Activated naive CD4-positive, alpha-beta T cell treated with anti-CD3 and anti-CD28 coated beads for 36 hours (primary cell): ENCODE measurements at regions of chr11 and their contacts with region 1.

Region 1: DNA sequence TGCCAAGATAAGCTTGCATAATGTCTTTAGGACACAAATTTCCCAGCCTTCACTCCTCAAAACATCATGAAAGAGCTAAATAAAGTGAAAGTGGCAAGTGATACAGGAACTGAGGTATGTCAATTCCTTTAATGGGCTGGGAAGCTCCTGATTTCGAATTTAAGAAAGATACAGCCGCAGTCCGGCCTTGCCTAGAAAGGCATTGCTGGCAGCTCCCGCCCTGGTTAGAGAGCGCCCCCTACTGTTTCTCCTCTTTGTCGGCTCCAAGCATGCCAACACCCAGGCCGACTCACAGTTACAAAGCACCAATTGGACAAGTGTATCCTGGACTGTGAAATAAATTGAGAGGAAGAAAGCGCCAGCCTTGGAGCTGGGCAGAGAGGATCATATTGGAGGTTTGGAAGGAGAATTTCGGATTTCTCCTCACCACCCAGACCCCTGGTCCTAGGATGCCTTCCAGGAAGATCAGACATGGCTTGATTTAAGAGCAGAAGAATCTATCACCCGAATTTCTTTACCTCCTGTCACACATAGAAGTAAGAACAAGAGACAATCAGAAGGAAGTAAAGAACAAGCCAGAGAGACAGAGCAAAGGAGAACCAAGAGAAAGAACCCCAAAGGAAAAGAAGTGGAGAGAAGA is 84.0 kb downstream of the FAM76B start:
- DNase-seq: peak; percentile 95
- H3K4me3 Mint-ChIP-seq: no peak overlapping the region
- H3K27ac Mint-ChIP-seq: no peak overlapping the region
- H3K4me1 Mint-ChIP-seq: peaks cover 16% of the 10 kb centered on the region
- H3K27me3 Mint-ChIP-seq: no peaks in the 10 kb centered on the region

Region 2: DNA sequence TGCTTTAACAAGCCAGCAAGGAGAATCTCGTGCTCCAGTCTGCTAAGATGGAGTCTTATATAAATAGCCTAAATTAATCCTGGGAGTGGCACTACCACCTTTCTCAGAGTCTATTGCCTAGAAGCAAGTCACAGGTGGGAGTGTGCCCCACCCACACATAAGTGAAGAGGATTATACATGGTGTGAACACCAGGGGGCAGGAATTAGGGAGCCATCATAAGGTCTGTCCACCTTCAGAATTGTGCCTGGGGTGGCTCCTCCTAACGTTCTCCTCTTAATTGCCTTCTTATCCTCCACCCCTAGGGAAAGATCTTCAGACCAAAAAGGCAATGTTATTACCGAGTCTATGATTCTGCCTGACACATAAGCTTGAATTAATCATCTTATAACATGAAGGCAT is 197.8 kb before region 1 on chr11:
- CTCF ChIA-PET with region 1: interaction called, 9 read pairs
- intact Hi-C with region 1: loop called (anchors 1 kb)
- DNase-seq: peak; percentile 7
- H3K4me3 Mint-ChIP-seq: no peak overlapping the region
- H3K27ac Mint-ChIP-seq: no peak overlapping the region
- H3K4me1 Mint-ChIP-seq: no peaks in the 10 kb centered on the region
- H3K27me3 Mint-ChIP-seq: no peaks in the 10 kb centered on the region

Region 3: DNA sequence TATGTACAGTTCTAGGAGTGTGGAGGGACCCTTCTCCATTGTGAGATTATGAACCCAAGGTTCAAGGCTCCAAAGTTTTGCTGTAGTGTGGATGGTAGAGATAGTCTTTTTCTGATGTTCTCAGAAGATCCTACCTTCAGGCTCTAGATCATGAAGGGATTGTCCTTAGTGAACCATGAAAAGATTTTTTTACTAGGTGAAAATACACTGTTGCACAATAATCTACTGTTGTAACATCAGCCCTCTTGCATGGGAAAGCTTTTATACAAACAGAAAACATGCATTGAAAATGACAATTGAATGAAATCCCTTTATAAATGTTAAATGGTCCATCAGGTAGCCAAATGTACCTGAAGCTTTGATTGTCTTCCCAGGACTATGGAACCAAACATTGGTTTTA is 93.8 kb before region 1 on chr11:
- CTCF ChIA-PET with region 1: no interaction called
- intact Hi-C with region 1: no loop called
- DNase-seq: no peak
- H3K4me3 Mint-ChIP-seq: no peak overlapping the region
- H3K27ac Mint-ChIP-seq: no peak overlapping the region
- H3K4me1 Mint-ChIP-seq: peaks cover 2% of the 10 kb centered on the region
- H3K27me3 Mint-ChIP-seq: no peaks in the 10 kb centered on the region

Region 4: GRCh38 chr11:95680169-95680929 is 25.3 kb before region 1 on chr11:
- CTCF ChIA-PET with region 1: interaction called, 11 read pairs
- intact Hi-C with region 1: no loop called
- DNase-seq: no peak
- H3K4me3 Mint-ChIP-seq: peak overlapping the region; percentile 32
- H3K27ac Mint-ChIP-seq: peak overlapping the region; percentile 48
- H3K4me1 Mint-ChIP-seq: peaks cover 88% of the 10 kb centered on the region
- H3K27me3 Mint-ChIP-seq: no peaks in the 10 kb centered on the region

Region 5: GRCh38 chr11:95715777-95716241 is 10.2 kb after region 1 on chr11:
- CTCF ChIA-PET with region 1: interaction called, 21 read pairs
- intact Hi-C with region 1: loop called (anchors 1 kb)
- DNase-seq: peak; percentile 64
- H3K4me3 Mint-ChIP-seq: no peak overlapping the region
- H3K27ac Mint-ChIP-seq: no peak overlapping the region
- H3K4me1 Mint-ChIP-seq: peaks cover 54% of the 10 kb centered on the region
- H3K27me3 Mint-ChIP-seq: no peaks in the 10 kb centered on the region